Tibial artery (tissue), 4 donors: ENCODE measurements at regions of chr7 and their contacts with region 1.

Region 1: GRCh38 chr7:140924019-140924820 is 509 bp downstream of the BRAF start:
- DNase-seq: peak; percentile 68 to 84
- H3K4me3 ChIP-seq: peak overlapping the region; percentile 99 to 100
- H3K27ac ChIP-seq: peak overlapping the region; percentile 100
- H3K4me1 ChIP-seq: peaks cover 0 to 28% (median 3%) of the 10 kb centered on the region in 4 donors
- H3K27me3 ChIP-seq: no peaks in the 10 kb centered on the region
- CTCF ChIP-seq: peak; percentile 22 to 31

Region 2: GRCh38 chr7:140673063-140673773 is 251.0 kb before region 1 on chr7:
- intact Hi-C with region 1: loop called (anchors 10 kb)
- DNase-seq: peak in 1 of 2 donors; percentile 73
- H3K4me3 ChIP-seq: peak overlapping the region; percentile 68 to 94
- H3K27ac ChIP-seq: peak overlapping the region; percentile 87 to 90
- H3K4me1 ChIP-seq: peaks cover 0 to 32% (median 19%) of the 10 kb centered on the region in 4 donors
- H3K27me3 ChIP-seq: no peaks in the 10 kb centered on the region
- CTCF ChIP-seq: no peak

Region 3: GRCh38 chr7:140707132-140707531 is 217.1 kb before region 1 on chr7:
- intact Hi-C with region 1: no loop called
- DNase-seq: no peak
- H3K4me3 ChIP-seq: no peak overlapping the region
- H3K27ac ChIP-seq: no peak overlapping the region
- H3K4me1 ChIP-seq: no peaks in the 10 kb centered on the region
- H3K27me3 ChIP-seq: no peaks in the 10 kb centered on the region
- CTCF ChIP-seq: no peak

Region 4: DNA sequence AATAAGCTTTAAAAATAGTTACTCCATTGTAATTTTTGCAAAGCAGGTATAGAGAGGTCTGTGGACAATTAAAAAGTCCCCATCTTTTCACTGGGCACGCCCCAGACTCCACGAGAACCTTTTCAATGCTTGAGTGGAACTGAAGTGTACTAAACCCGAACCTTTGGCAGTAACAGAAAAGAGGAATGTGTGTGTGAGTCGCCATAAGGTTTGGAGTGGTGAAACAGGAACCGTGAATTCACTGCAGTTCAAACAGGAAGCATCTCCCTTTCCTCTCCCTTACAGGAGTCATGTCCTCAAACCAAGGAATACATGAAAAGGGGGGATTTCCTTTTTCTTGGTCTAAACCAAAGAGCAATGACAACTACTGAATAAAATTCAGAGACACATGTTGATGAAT is 204.5 kb before region 1 on chr7:
- intact Hi-C with region 1: no loop called
- DNase-seq: no peak
- H3K4me3 ChIP-seq: no peak overlapping the region
- H3K27ac ChIP-seq: no peak overlapping the region
- H3K4me1 ChIP-seq: no peaks in the 10 kb centered on the region
- H3K27me3 ChIP-seq: no peaks in the 10 kb centered on the region
- CTCF ChIP-seq: no peak